Activated CD8-positive, alpha-beta T cell treated with anti-CD3 and anti-CD28 coated beads for 36 hours (primary cell): ENCODE measurements at regions of chr1 and their contacts with region 1.

Region 1: DNA sequence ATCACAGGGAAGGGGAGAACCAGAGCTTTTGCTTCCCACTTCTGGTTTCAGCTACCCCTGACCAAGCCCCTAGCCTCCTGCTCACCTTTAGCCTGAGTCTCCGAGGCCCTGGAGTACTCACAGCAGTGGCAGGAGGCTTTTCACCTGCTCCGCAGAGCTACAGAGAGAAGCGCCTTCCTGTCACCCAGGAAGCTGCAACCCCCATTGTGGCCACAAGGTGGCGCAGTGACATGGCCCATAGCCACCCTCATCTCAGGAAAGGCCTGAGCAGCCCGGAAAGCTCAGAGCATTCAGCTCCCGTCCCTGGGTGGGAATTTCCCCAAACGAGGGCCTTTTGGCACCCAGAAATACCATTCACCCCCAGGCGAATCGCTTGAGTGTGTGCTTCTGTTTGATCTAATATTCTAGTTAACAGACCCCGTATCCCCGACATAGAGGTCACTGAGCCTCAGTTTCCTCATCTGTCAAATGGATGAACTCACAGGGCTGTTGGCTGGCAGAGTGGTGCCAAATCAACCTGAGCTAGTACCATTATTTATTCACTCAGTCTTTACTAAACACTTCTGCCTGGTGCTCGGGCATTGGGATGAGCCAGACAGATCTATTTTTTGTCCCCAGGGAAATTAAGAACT is 25.3 kb downstream of the A3GALT2 start:
- DNase-seq: peak; percentile 95
- ATAC-seq: peak; percentile 95
- H3K4me3 Mint-ChIP-seq: no peak overlapping the region
- H3K27ac Mint-ChIP-seq: no peak overlapping the region
- H3K4me1 Mint-ChIP-seq: peaks cover 7% of the 10 kb centered on the region
- H3K27me3 Mint-ChIP-seq: no peaks in the 10 kb centered on the region
- CTCF ChIP-seq: peak; percentile 96

Region 2: DNA sequence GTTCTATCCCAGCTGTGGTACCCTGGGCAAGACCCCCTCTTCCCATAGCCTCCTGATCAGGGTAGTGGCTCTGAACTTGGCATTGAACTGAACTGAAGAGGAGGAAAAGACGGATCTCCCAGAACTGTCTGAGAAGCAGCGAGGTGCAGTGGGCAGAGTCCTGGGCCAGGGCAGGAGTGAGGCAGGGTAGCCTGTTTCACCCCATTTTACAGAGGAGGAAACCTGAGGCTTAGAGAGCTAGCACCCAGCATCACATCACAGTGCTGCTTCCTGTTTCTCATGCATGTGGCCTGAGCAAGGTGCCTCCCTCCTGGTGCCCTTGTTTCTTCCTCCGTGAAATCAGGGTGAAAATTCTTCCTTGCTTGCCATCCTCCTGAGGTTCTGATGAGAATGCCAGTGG is 22.2 kb before region 1 on chr1:
- CTCF ChIA-PET with region 1: interaction called, 17 read pairs
- POLR2A ChIA-PET with region 1: no interaction called
- intact Hi-C with region 1: no loop called
- DNase-seq: no peak
- ATAC-seq: no peak
- H3K4me3 Mint-ChIP-seq: no peak overlapping the region
- H3K27ac Mint-ChIP-seq: no peak overlapping the region
- H3K4me1 Mint-ChIP-seq: peaks cover 13% of the 10 kb centered on the region
- H3K27me3 Mint-ChIP-seq: no peaks in the 10 kb centered on the region
- CTCF ChIP-seq: no peak

Region 3: GRCh38 chr1:33306648-33307493 is 11.3 kb after region 1 on chr1:
- CTCF ChIA-PET with region 1: interaction called, 17 read pairs
- POLR2A ChIA-PET with region 1: no interaction called
- intact Hi-C with region 1: no loop called
- DNase-seq: no peak
- ATAC-seq: no peak
- H3K4me3 Mint-ChIP-seq: no peak overlapping the region
- H3K27ac Mint-ChIP-seq: no peak overlapping the region
- H3K4me1 Mint-ChIP-seq: peaks cover 11% of the 10 kb centered on the region
- H3K27me3 Mint-ChIP-seq: peaks cover 11% of the 10 kb centered on the region
- CTCF ChIP-seq: no peak

Region 4: GRCh38 chr1:33338440-33339211 is 43.1 kb after region 1 on chr1:
- CTCF ChIA-PET with region 1: interaction called, 17 read pairs
- POLR2A ChIA-PET with region 1: interaction called, 3 read pairs
- intact Hi-C with region 1: no loop called
- DNase-seq: no peak
- ATAC-seq: no peak
- H3K4me3 Mint-ChIP-seq: no peak overlapping the region
- H3K27ac Mint-ChIP-seq: no peak overlapping the region
- H3K4me1 Mint-ChIP-seq: peaks cover 30% of the 10 kb centered on the region
- H3K27me3 Mint-ChIP-seq: no peaks in the 10 kb centered on the region
- CTCF ChIP-seq: no peak

Region 5: DNA sequence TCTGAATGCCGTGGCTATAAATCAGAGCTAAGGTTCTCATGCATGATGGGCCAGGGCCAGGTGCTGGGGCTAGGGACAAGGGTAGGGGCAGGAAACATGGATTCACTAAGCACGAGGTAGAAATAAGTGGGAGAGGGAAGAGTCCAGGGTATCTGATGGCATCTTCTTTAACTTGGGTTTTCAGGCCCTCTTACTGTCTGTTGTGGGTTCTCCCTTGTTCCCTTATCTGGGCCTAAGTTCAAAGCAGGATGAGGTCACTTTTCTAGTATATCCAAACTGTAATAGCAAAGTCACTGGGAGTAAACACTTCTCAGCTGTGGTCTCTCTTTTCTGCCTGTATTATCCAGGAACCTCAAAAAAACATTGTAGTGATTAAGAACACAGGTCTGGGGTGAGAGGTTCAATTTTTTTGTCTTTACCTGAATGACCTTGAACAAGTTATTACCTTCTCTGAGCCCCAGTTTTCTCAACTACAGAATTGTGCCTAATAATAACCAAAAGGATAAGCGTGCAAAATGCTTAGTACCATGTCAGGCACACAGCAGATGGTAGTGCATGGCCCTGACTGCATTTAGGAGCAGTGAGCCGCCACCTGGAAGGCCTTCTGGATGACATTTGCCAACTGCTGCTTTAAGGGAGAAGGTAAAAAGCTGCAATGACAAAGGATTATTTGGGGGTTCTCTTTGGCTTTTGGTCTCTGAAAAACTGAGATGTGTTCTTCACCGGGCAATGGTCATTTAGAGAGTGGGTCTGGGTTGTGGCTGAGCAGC is 79.0 kb after region 1 on chr1:
- CTCF ChIA-PET with region 1: interaction called, 37 read pairs
- POLR2A ChIA-PET with region 1: no interaction called
- intact Hi-C with region 1: no loop called
- DNase-seq: no peak
- ATAC-seq: no peak
- H3K4me3 Mint-ChIP-seq: no peak overlapping the region
- H3K27ac Mint-ChIP-seq: no peak overlapping the region
- H3K4me1 Mint-ChIP-seq: peaks cover 3% of the 10 kb centered on the region
- H3K27me3 Mint-ChIP-seq: no peaks in the 10 kb centered on the region
- CTCF ChIP-seq: no peak